ENCODE measurements at regions of chr16 and their contacts with region 1.

Region 1: GRCh38 chr16:23949630-23950290 is 114.0 kb downstream of the PRKCB start:
- DNase-seq: peak; percentile 95
- H3K4me3 ChIP-seq: peak overlapping the region in 1 of 8 donors; percentile 30
- H3K27ac ChIP-seq: peak overlapping the region; percentile 41 to 87 (median 74)
- H3K4me1 ChIP-seq: peaks cover 21 to 100% (median 63%) of the 10 kb centered on the region in 6 donors
- H3K27me3 ChIP-seq: no peaks in the 10 kb centered on the region
- CTCF ChIP-seq: peak in 1 of 11 experiments; percentile 33
- POLR2A ChIP-seq: no peak

Region 2: GRCh38 chr16:23826528-23827045 is 123.2 kb before region 1 on chr16:
- intact Hi-C with region 1: loop called (anchors 10 kb)
- DNase-seq: no peak
- H3K4me3 ChIP-seq: peak overlapping the region in 1 of 8 donors; percentile 41
- H3K27ac ChIP-seq: peak overlapping the region; percentile 53 to 88 (median 81)
- H3K4me1 ChIP-seq: peaks cover 7 to 38% (median 22%) of the 10 kb centered on the region in 6 donors
- H3K27me3 ChIP-seq: no peaks in the 10 kb centered on the region
- CTCF ChIP-seq: no peak
- POLR2A ChIP-seq: no peak